ENCODE measurements at regions of chr19 and their contacts with region 1.

Region 1: GRCh38 chr19:3163230-3163886 is 15.2 kb upstream of the S1PR4 start:
- DNase-seq: peak in 8 of 9 donors; percentile 48 to 76 (median 62)
- ATAC-seq: peak; percentile 76
- H3K4me3 ChIP-seq: no peak overlapping the region
- H3K4me3 Mint-ChIP-seq: peak overlapping the region in 2 of 10 donors; percentile 35 to 38
- H3K27ac ChIP-seq: no peak overlapping the region
- H3K27ac Mint-ChIP-seq: peak overlapping the region in 6 of 9 donors; percentile 14 to 83 (median 56)
- H3K4me1 ChIP-seq: no peaks in the 10 kb centered on the region
- H3K4me1 Mint-ChIP-seq: peaks cover 12 to 48% (median 15%) of the 10 kb centered on the region in 7 donors
- H3K27me3 ChIP-seq: no peaks in the 10 kb centered on the region
- H3K27me3 Mint-ChIP-seq: no peaks in the 10 kb centered on the region

Region 2: GRCh38 chr19:2887391-2887914 is 275.9 kb before region 1 on chr19:
- CTCF ChIA-PET with region 1: no interaction called
- POLR2A ChIA-PET with region 1: no interaction called
- intact Hi-C with region 1: loop called in 1 of 2 experiments (anchors 5 kb)
- DNase-seq: peak in 4 of 9 donors; percentile 14 to 19 (median 17)
- ATAC-seq: peak; percentile 50
- H3K4me3 ChIP-seq: no peak overlapping the region
- H3K4me3 Mint-ChIP-seq: peak overlapping the region in 1 of 10 donors; percentile 42
- H3K27ac ChIP-seq: no peak overlapping the region
- H3K27ac Mint-ChIP-seq: peak overlapping the region in 4 of 9 donors; percentile 26 to 84 (median 76)
- H3K4me1 ChIP-seq: no peaks in the 10 kb centered on the region
- H3K4me1 Mint-ChIP-seq: peaks cover 0 to 13% (median 8%) of the 10 kb centered on the region in 7 donors
- H3K27me3 ChIP-seq: no peaks in the 10 kb centered on the region
- H3K27me3 Mint-ChIP-seq: no peaks in the 10 kb centered on the region

Region 3: GRCh38 chr19:3075895-3076431 is 87.4 kb before region 1 on chr19:
- CTCF ChIA-PET with region 1: no interaction called
- POLR2A ChIA-PET with region 1: no interaction called
- intact Hi-C with region 1: loop called (anchors 1 to 10 kb)
- DNase-seq: peak; percentile 63 to 85 (median 71)
- ATAC-seq: peak; percentile 99
- H3K4me3 ChIP-seq: no peak overlapping the region
- H3K4me3 Mint-ChIP-seq: peak overlapping the region in 4 of 10 donors; percentile 44 to 68 (median 50)
- H3K27ac ChIP-seq: no peak overlapping the region
- H3K27ac Mint-ChIP-seq: no peak overlapping the region
- H3K4me1 ChIP-seq: peaks cover 0 to 9% of the 10 kb centered on the region in 2 donors
- H3K4me1 Mint-ChIP-seq: peaks cover 0 to 10% (median 4%) of the 10 kb centered on the region in 7 donors
- H3K27me3 ChIP-seq: no peaks in the 10 kb centered on the region
- H3K27me3 Mint-ChIP-seq: peaks cover 0 to 6% (median 0%) of the 10 kb centered on the region in 5 donors

Region 4: GRCh38 chr19:3125900-3126524 is 37.3 kb before region 1 on chr19:
- CTCF ChIA-PET with region 1: interaction called, 34 read pairs
- POLR2A ChIA-PET with region 1: no interaction called
- intact Hi-C with region 1: loop called (anchors 1 kb)
- DNase-seq: peak in 8 of 9 donors; percentile 32 to 74 (median 64)
- ATAC-seq: peak; percentile 92
- H3K4me3 ChIP-seq: no peak overlapping the region
- H3K4me3 Mint-ChIP-seq: no peak overlapping the region
- H3K27ac ChIP-seq: no peak overlapping the region
- H3K27ac Mint-ChIP-seq: no peak overlapping the region
- H3K4me1 ChIP-seq: no peaks in the 10 kb centered on the region
- H3K4me1 Mint-ChIP-seq: peaks cover 0 to 21% (median 5%) of the 10 kb centered on the region in 7 donors
- H3K27me3 ChIP-seq: no peaks in the 10 kb centered on the region
- H3K27me3 Mint-ChIP-seq: peaks cover 0 to 6% (median 2%) of the 10 kb centered on the region in 5 donors

Region 5: DNA sequence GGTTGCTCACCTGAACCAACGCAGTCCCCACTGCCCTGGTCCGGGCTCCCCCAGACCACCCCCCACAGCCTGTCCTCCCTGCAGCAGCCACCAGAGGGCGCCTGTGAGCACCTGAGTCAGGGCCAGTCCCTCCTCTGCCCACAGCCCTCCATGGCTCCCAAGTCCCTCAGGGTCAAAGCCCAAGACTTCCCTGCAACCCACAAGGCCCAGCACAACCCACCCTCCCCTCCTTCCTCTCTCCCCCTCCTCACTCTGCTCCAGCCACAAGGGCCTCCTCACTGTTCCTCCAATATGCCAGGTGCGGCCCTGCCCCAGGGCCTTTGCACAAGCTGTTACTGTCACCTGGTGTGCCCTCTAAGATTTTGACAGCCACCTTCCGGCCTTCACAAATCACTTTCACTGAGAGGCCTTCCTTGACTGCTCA is 16.7 kb before region 1 on chr19:
- CTCF ChIA-PET with region 1: interaction called, 12 read pairs
- POLR2A ChIA-PET with region 1: no interaction called
- intact Hi-C with region 1: loop called (anchors 1 kb)
- DNase-seq: peak; percentile 32 to 81 (median 59)
- ATAC-seq: peak; percentile 63
- H3K4me3 ChIP-seq: no peak overlapping the region
- H3K4me3 Mint-ChIP-seq: peak overlapping the region in 1 of 10 donors; percentile 56
- H3K27ac ChIP-seq: no peak overlapping the region
- H3K27ac Mint-ChIP-seq: peak overlapping the region in 4 of 9 donors; percentile 21 to 78 (median 56)
- H3K4me1 ChIP-seq: no peaks in the 10 kb centered on the region
- H3K4me1 Mint-ChIP-seq: peaks cover 0 to 41% (median 0%) of the 10 kb centered on the region in 7 donors
- H3K27me3 ChIP-seq: no peaks in the 10 kb centered on the region
- H3K27me3 Mint-ChIP-seq: no peaks in the 10 kb centered on the region

Region 6: DNA sequence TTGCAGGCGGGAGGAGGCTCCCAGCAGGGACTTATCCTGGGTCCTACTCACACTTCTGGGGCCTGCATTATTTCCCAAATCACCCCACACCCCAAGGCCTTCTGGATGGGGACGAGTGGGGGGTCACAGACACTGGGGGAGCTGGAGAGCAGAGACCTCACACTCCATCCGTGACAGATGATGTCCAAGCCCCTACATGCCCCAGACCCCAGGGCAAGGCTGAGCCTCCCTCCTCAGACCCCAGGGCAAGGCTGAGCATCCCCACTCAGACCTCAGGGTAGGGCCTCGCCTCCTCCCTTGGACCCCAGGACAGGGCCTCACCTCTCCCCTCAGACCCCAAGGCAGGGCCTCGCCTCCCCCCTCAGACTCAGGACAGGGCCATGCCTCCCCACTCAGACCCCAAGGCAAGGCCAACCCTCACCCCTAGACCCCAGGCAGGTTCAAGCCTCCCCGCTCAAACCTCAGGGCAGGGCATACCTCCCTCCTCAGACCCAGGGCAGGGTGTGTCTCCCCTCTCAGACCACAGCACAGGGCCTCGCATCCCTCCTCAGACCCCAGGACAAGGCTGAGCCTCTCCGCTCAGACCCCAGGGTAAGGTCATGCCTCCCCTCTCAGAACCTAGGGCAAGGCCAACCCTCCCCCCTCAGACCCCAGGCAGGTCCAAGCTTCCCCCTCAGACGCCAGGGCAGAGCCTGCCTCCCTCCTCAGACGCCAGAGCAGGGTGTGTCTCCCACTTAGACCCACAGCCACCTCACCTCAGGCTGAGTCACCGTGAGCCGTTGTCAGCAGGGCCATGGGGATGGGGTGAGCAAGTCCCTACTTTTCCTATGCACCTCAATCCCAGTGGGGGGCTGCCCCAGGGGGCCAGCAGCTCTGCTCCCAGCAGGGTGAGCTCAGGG is 13.5 kb after region 1 on chr19:
- CTCF ChIA-PET with region 1: interaction called, 3 read pairs
- POLR2A ChIA-PET with region 1: interaction called, 11 read pairs
- intact Hi-C with region 1: loop called (anchors 1 to 2 kb)
- DNase-seq: peak in 2 of 9 donors; percentile 50 to 65
- ATAC-seq: peak; percentile 66
- H3K4me3 ChIP-seq: peak overlapping the region; percentile 58
- H3K4me3 Mint-ChIP-seq: peak overlapping the region; percentile 74 to 95 (median 84)
- H3K27ac ChIP-seq: peak overlapping the region; percentile 61
- H3K27ac Mint-ChIP-seq: peak overlapping the region; percentile 86 to 99 (median 93)
- H3K4me1 ChIP-seq: peaks cover 22 to 23% of the 10 kb centered on the region in 2 donors
- H3K4me1 Mint-ChIP-seq: peaks cover 5 to 26% (median 21%) of the 10 kb centered on the region in 7 donors
- H3K27me3 ChIP-seq: no peaks in the 10 kb centered on the region
- H3K27me3 Mint-ChIP-seq: no peaks in the 10 kb centered on the region

Region 7: GRCh38 chr19:3193256-3194105 is 30.1 kb after region 1 on chr19:
- CTCF ChIA-PET with region 1: no interaction called
- POLR2A ChIA-PET with region 1: no interaction called
- intact Hi-C with region 1: no loop called
- DNase-seq: peak in 1 of 9 donors; percentile 7
- ATAC-seq: peak; percentile 20
- H3K4me3 ChIP-seq: no peak overlapping the region
- H3K4me3 Mint-ChIP-seq: no peak overlapping the region
- H3K27ac ChIP-seq: no peak overlapping the region
- H3K27ac Mint-ChIP-seq: no peak overlapping the region
- H3K4me1 ChIP-seq: peaks cover 4 to 9% of the 10 kb centered on the region in 2 donors
- H3K4me1 Mint-ChIP-seq: peaks cover 10 to 15% (median 15%) of the 10 kb centered on the region in 7 donors
- H3K27me3 ChIP-seq: no peaks in the 10 kb centered on the region
- H3K27me3 Mint-ChIP-seq: no peaks in the 10 kb centered on the region